ENCODE measurements at regions of chr9 and their contacts with region 1.

Region 1: DNA sequence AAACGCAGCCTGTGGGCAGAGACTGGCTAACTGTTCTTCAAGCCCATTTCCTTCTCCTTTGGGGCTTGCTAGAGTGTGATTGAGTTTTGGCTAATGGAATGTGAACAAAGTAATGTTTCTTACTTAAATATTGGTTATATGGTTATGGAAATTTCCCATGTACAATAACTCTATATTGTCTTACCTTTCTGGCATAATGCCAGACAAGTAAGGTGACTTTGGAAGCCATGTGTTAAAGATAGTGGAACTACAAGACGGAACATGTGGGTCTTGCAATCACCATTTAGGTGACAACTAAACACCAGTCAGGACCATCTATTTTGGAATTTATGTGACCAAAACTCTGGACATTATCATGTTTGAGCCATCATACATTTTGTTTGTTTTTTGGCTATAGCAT is 260.2 kb downstream of the CCDC171 start:
- DNase-seq: no peak
- ATAC-seq: no peak
- H3K4me3 ChIP-seq: no peak overlapping the region
- H3K27ac ChIP-seq: no peak overlapping the region
- H3K4me1 ChIP-seq: no peaks in the 10 kb centered on the region
- H3K27me3 ChIP-seq: no peaks in the 10 kb centered on the region
- CTCF ChIP-seq: no peak
- POLR2A ChIP-seq: no peak
- RAD21 ChIP-seq: no peak

Region 2: GRCh38 chr9:15824310-15824709 is 11.2 kb after region 1 on chr9:
- CTCF ChIA-PET with region 1: interaction called, 10 read pairs
- POLR2A ChIA-PET with region 1: no interaction called
- RAD21 ChIA-PET with region 1: no interaction called
- intact Hi-C with region 1: no loop called
- DNase-seq: peak; percentile 48
- ATAC-seq: peak; percentile 86
- H3K4me3 ChIP-seq: no peak overlapping the region
- H3K27ac ChIP-seq: no peak overlapping the region
- H3K4me1 ChIP-seq: no peaks in the 10 kb centered on the region
- H3K27me3 ChIP-seq: 0 out of 2 replicates have a peak, but pooled peaks cover 5% of the 10 kb centered on the region
- CTCF ChIP-seq: peak; percentile 13 to 40 (median 35); a peak in 3 of 6 replicates
- POLR2A ChIP-seq: no peak
- RAD21 ChIP-seq: peak; percentile 55

Region 3: DNA sequence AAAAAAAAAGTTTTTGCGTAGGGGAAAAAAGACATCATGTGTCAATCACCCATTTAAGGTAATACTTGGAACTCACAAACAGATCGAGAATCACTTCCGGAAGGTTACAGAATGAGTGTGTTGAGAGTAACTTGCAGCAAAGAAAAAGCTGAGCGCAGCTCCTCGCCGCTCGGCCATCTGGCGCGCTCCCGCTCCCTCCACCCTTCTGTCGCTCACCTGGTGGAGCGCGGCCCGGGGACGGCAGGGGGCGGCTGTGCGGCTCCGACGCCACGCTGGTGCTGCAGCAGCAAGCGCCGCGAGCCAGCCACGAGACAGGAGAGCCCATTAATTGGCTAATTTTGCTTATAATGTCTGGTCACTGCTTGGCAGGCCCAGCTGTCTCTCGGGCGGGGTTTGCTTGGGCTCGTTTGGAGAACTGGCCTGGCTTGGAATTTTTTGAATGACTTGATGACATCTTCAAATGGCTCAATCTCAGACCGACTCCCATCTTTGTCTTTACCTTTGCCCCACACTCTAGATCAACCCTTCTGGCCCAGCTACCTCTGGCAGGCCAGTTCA is 341.5 kb after region 1 on chr9:
- CTCF ChIA-PET with region 1: no interaction called
- POLR2A ChIA-PET with region 1: no interaction called
- RAD21 ChIA-PET with region 1: no interaction called
- intact Hi-C with region 1: no loop called
- DNase-seq: no peak
- ATAC-seq: peak; percentile 98
- H3K4me3 ChIP-seq: no peak overlapping the region
- H3K27ac ChIP-seq: no peak overlapping the region
- H3K4me1 ChIP-seq: peaks cover 0 to 9% of the 10 kb centered on the region in 2 experiments; a peak in 1 of 4 replicates
- H3K27me3 ChIP-seq: no peaks in the 10 kb centered on the region
- CTCF ChIP-seq: peak; percentile 3 to 44 (median 40); a peak in 4 of 6 replicates
- POLR2A ChIP-seq: no peak
- RAD21 ChIP-seq: peak; percentile 30; the same call in 1 of the 2 replicates